Activated CD4-positive, alpha-beta T cell treated with anti-CD3 and anti-CD28 coated beads for 36 hours (primary cell): ENCODE measurements at regions of chr5 and their contacts with region 1.

Region 1: DNA sequence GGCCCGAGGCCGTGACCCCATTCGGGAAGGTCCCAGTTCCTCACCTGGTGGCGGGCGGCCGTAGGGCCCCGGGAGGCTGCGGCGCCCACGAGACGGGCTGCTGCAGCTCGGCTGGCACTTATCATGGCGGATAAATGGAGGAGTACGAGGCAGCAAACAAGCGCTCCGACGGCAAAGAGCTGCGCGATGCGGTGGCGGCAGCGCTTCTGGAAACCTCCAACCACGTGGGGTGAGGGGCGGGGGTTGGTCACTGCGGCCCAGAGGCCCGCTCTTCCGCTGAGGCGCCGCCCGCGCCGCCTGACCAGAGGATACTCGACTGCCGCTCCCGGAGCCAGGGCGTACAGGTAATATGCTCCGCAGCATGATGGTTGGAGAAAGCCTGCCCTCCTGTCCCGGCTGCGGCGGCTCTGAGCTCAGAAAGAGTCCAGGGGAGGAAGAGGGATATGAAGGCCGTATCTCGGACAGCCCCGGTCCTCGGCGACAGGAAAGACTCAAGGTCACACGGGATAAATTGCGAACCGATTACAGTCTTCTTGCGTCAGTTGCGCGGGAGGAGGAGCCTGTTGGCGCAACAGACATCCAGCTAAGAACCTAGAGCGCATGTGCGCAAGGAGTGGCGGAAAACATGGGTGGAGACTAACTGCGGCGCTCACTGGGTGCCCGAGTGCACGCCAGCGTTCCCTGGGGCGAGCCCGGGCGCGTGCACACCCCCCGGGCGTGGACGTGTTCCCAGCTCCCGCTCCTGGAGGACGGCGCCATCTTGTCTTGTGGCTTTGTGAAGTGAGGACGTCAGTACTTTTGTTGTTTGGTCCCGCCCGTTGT is at the start of gene HSPA9:
- DNase-seq: peak; percentile 98
- ATAC-seq: peak; percentile 89
- H3K4me3 Mint-ChIP-seq: peak within 1 kb of the TSS; percentile 96
- H3K27ac Mint-ChIP-seq: peak within 1 kb of the TSS; percentile 99
- H3K4me1 Mint-ChIP-seq: peaks cover 43% of the 10 kb centered on the region
- H3K27me3 Mint-ChIP-seq: no peaks in the 10 kb centered on the region
- total RNA-seq, gene HSPA9: 431 to 466 TPM

Region 2: DNA sequence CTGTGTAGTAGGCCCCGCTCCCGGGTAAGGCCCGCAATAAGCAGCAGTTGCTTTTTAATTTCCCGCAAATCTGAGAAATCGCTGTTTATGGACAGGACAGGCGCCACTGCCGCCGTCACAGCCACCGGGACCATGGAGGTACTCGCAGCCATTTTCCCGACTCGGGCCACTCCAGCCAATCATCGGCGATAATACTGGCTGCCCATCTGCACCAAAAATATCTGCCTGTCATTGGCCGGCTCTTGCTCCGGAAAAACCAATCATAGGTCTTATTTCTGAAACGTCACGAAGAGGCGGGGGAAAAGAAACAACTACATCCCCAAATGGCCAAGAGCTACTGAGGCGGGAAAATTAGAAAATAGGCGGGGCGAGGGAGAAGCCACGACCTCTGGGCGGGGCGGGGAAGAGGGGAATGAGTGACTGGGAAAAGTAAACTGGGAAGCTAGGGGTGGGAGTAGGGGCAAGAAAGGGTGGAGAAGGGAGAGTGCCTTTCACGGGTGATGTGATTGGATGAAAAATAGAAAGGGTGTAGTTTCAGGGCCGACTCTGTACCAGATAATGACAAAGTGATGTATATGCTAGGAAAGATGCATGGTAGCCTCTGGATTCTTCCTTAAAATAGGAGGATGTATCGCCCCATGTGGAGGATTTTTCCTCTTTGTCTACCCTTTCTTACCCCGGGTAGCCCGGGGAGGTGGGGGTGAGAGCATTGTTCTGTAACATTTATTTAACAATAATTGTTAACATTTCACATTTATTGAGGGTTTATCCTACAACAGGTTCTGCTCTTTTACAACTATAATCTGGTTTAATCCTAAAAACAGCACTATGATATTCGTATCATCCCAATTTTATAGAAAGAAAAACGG is 362.0 kb before region 1 on chr5 and contains the start of gene CDC23:
- CTCF ChIA-PET with region 1: no interaction called
- POLR2A ChIA-PET with region 1: no interaction called
- intact Hi-C with region 1: loop called in 1 of 2 experiments (anchors 1 kb)
- DNase-seq: peak; percentile 94
- ATAC-seq: peak; percentile 98
- H3K4me3 Mint-ChIP-seq: peak within 1 kb of the TSS; percentile 92
- H3K27ac Mint-ChIP-seq: peak within 1 kb of the TSS; percentile 94
- H3K4me1 Mint-ChIP-seq: peaks cover 16% of the 10 kb centered on the region
- H3K27me3 Mint-ChIP-seq: no peaks in the 10 kb centered on the region
- total RNA-seq, gene CDC23: 34.0 to 38.1 TPM

Region 3: DNA sequence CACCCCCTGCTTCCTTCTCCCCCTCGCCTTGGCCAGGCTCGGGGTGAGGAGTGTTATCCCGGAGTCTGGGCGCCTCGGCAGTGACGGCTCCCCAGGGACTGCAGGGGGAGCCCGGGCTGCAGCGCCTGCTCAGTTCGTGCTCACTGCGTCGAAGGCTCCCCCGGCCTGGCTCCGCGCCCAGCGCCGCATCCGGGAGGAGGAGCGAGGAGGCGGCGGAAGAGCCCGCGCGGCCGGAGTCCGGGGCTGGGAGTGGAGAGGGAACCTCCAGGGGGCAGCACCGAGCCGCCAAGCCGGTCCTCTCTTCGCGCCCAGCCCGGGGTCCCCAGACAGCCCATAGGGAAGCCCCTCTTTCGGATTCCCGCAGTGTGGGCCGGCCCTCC is 111.4 kb before region 1 on chr5:
- CTCF ChIA-PET with region 1: no interaction called
- POLR2A ChIA-PET with region 1: interaction called, 11 read pairs
- intact Hi-C with region 1: loop called in 1 of 2 experiments (anchors 1 kb)
- DNase-seq: peak; percentile 97
- ATAC-seq: peak; percentile 54
- H3K4me3 Mint-ChIP-seq: peak overlapping the region; percentile 77
- H3K27ac Mint-ChIP-seq: peak overlapping the region; percentile 94
- H3K4me1 Mint-ChIP-seq: peaks cover 58% of the 10 kb centered on the region
- H3K27me3 Mint-ChIP-seq: no peaks in the 10 kb centered on the region

Region 4: GRCh38 chr5:138553437-138554095 is 21.8 kb before region 1 on chr5:
- CTCF ChIA-PET with region 1: interaction called, 10 read pairs
- POLR2A ChIA-PET with region 1: interaction called, 4 read pairs
- intact Hi-C with region 1: no loop called
- DNase-seq: no peak
- ATAC-seq: no peak
- H3K4me3 Mint-ChIP-seq: no peak overlapping the region
- H3K27ac Mint-ChIP-seq: peak overlapping the region; percentile 25
- H3K4me1 Mint-ChIP-seq: peaks cover 7% of the 10 kb centered on the region
- H3K27me3 Mint-ChIP-seq: no peaks in the 10 kb centered on the region

Region 5: DNA sequence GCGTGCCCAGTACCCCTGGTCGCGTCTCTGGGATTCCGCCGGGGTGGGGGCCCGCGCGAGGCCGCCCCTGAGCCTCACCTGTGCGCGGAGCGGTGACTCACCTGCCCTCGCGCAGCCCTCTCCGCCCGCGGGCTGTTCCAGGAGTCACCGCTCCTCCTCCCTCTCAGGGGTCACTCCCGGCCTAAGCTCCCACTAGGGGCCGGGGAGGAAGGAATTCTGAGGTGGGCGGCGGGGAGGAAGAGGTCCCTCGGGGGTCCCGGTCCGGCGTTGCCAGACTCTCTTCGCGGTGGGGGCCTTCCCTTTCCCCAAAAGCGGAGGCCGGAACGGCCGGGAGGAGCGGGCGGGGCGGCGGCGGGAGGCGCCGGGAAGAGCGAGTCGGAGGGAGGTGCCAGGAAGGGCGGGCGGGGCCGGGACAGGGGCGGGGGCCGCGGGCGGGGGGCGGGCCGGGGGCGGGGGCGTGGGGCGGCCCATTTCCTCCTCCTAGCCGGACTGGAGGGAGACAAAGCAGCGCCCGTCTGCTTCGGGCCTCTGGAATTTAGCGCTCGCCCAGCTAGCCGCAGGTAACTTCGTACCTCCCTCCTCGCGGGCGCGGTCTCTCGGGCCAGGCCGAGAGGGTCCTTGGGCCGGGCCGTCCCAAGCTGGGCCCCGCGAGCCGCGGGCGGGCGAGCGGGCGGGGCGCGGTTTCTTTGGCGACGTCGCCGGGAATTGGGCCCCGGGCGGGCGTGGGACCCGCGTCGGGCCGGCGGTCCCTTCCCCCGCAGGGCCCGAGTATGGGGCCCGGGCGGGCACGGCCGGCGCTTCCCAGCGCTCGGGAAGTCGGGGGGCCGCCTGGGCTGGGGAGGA is 177.8 kb after region 1 on chr5 and contains the start of gene CTNNA1:
- CTCF ChIA-PET with region 1: no interaction called
- POLR2A ChIA-PET with region 1: no interaction called
- intact Hi-C with region 1: loop called in 1 of 2 experiments (anchors 2 kb)
- DNase-seq: peak; percentile 77
- ATAC-seq: peak; percentile 60
- H3K4me3 Mint-ChIP-seq: peak within 1 kb of the TSS; percentile 73
- H3K27ac Mint-ChIP-seq: peak within 1 kb of the TSS; percentile 49
- H3K4me1 Mint-ChIP-seq: peaks cover 30% of the 10 kb centered on the region
- H3K27me3 Mint-ChIP-seq: peaks cover 30% of the 10 kb centered on the region
- total RNA-seq, gene CTNNA1: 78.8 to 86.7 TPM

Region 6: GRCh38 chr5:139273572-139274289 is 698.3 kb after region 1 on chr5:
- CTCF ChIA-PET with region 1: interaction called, 3 read pairs
- POLR2A ChIA-PET with region 1: interaction called, 3 read pairs
- intact Hi-C with region 1: loop called in 1 of 2 experiments (anchors 1 kb)
- DNase-seq: peak; percentile 95
- ATAC-seq: peak; percentile 90
- H3K4me3 Mint-ChIP-seq: peak overlapping the region; percentile 95
- H3K27ac Mint-ChIP-seq: peak overlapping the region; percentile 88
- H3K4me1 Mint-ChIP-seq: peaks cover 54% of the 10 kb centered on the region
- H3K27me3 Mint-ChIP-seq: no peaks in the 10 kb centered on the region

Region 7: DNA sequence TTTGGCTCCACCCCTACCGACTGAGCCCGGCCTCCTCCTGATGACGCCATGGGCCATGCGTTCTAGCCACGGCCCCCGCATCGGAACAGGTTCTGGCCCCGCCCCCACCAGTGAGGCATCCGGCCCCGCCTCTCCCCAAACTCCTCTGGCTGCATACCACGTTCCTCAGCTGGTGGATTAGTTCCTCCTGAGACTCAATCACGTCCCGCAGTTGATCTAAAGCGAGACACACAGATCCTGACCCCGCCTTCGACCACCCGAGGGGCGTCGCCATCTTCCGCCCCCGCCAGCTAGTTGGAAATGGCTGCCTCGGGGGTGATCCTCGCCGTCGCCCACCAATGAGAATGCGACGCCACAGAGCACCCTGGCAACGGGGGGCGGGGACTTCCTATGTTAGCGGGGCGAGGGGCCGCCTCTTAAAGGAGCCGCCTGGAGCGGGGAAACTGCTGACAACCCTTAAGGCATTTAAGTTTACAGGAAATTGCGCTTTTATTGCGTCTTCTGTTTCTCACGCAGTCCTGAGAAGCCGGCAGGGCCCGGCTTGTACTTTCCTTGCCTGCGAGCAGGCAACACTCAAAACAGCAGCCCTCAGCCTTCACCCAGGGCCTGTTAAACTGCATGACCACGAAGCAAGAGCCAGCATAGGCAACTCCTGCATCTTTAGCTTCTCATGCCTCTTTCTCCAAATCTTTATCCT is 828.5 kb after region 1 on chr5 and contains the start of gene SPATA24:
- CTCF ChIA-PET with region 1: no interaction called
- POLR2A ChIA-PET with region 1: no interaction called
- intact Hi-C with region 1: loop called in 1 of 2 experiments (anchors 1 kb)
- DNase-seq: peak; percentile 100
- ATAC-seq: peak; percentile 93
- H3K4me3 Mint-ChIP-seq: peak within 1 kb of the TSS; percentile 79
- H3K27ac Mint-ChIP-seq: peak within 1 kb of the TSS; percentile 99
- H3K4me1 Mint-ChIP-seq: peaks cover 37% of the 10 kb centered on the region
- H3K27me3 Mint-ChIP-seq: no peaks in the 10 kb centered on the region
- total RNA-seq, gene SPATA24: 4.6 to 5.9 TPM